ENCODE measurements at regions of chr16 and their contacts with region 1.

Region 1: GRCh38 chr16:17313085-17313611 is 157.6 kb downstream of the XYLT1 start:
- DNase-seq: peak in 2 of 3 donors; percentile 62 to 69
- H3K4me3 ChIP-seq: no peak overlapping the region
- H3K27ac ChIP-seq: peak overlapping the region in 1 of 2 experiments; percentile 63
- H3K4me1 ChIP-seq: peaks cover 2 to 27% (median 21%) of the 10 kb centered on the region in 4 experiments
- H3K27me3 ChIP-seq: no peaks in the 10 kb centered on the region

Region 2: GRCh38 chr16:17301593-17302135 is 11.5 kb before region 1 on chr16:
- CTCF ChIA-PET with region 1: interaction called, 28 read pairs
- POLR2A ChIA-PET with region 1: interaction called, 3 read pairs
- DNase-seq: peak; percentile 45 to 82 (median 66)
- H3K4me3 ChIP-seq: no peak overlapping the region
- H3K27ac ChIP-seq: no peak overlapping the region
- H3K4me1 ChIP-seq: peaks cover 8 to 41% (median 20%) of the 10 kb centered on the region in 4 experiments
- H3K27me3 ChIP-seq: no peaks in the 10 kb centered on the region

Measured in common myeloid progenitor, CD34-positive (primary cell).